Mucosa of descending colon (tissue), 3 donors: ENCODE measurements at regions of chr12 and their contacts with region 1.

Region 1: GRCh38 chr12:94140556-94140955 is 7.8 kb upstream of the PLXNC1 start:
- DNase-seq: peak; percentile 53 to 67 (median 55)
- ATAC-seq: peak; percentile 79
- H3K4me3 ChIP-seq: no peak overlapping the region
- H3K4me1 ChIP-seq: no peaks in the 10 kb centered on the region
- CTCF ChIP-seq: no peak

Region 2: GRCh38 chr12:94532490-94533422 is 392.2 kb after region 1 on chr12:
- intact Hi-C with region 1: loop called (anchors 5 kb)
- DNase-seq: peak in 2 of 3 donors; percentile 80
- ATAC-seq: peak; percentile 76
- H3K4me3 ChIP-seq: no peak overlapping the region
- H3K4me1 ChIP-seq: no peaks in the 10 kb centered on the region
- CTCF ChIP-seq: peak; percentile 44